Activated CD4-positive, alpha-beta T cell treated with anti-CD3 and anti-CD28 coated beads, Interleukin-2, amount 10 ng/mL, durations not matched to agents 24 days and 14 days (primary cell): ENCODE measurements at regions of chr2 and their contacts with region 1.

Region 1: DNA sequence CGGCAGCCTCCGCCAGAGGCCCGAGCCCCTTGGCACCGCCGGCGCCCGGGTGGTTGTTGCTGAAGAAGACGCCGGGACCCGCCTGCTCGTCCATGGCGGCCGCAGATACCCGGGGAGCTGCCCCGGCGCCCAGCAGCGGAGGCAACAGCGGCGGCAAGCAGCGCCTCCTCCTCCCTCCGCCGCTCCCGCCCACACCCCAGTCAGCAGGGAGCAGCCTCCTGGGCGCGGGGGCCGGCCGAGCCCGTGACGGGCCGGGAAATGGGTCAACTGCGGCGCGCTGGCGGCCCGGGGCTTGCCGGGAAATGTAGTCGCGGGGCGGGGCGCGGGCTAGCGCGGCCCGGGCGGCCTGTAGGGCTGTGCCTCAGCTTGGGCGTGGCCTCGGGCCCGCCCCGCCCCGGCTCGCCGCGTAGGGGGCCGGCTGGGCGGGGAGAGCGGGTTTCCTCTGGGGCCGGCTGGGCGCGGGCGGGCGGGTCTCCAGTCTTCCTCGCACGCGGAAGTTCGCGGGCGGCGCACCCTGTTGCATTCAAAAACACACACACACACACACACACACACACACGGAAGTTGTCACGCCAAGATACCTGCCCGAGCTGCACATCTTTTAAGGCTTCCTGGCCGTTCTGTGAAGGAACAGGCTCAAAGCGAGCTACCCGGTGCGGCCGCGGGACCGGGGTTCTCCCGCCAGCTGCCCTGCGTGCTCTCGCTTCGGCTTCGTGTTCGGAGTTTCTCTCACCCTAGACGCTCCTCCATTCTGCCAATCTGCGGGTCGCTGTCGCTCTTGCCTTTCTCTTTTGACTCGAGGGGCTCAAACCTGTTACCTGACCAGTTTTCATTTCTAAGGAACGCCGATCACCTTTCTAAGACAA is at the start of gene STRN:
- DNase-seq: peak; percentile 100
- H3K4me3 Mint-ChIP-seq: peak within 1 kb of the TSS; percentile 95
- H3K27ac Mint-ChIP-seq: peak within 1 kb of the TSS; percentile 92
- H3K4me1 Mint-ChIP-seq: peaks cover 46% of the 10 kb centered on the region
- H3K27me3 Mint-ChIP-seq: peaks cover 2% of the 10 kb centered on the region
- total RNA-seq, gene STRN: 27.0 and 28.0 TPM in 2 replicates

Region 2: DNA sequence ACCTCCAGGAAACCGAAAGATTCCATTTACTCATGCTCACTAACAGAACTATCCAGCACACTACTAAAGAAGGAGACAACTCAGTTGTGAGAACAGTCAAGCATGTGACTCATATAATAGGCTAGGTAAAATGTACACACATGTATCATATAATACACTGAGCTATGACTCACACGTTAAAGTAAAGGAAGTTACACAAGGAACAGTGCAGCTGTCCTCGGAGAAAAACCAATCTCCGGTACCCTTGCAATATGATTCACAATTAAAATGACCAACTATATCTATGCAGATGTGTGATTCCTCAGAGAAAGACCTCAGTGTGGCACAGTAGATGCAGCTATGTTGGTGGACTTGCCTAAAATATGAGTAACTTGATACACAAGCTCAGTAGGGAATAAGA is 76.8 kb before region 1 on chr2:
- intact Hi-C with region 1: loop called (anchors 2 kb)
- DNase-seq: no peak
- H3K4me3 Mint-ChIP-seq: peak overlapping the region; percentile 15
- H3K27ac Mint-ChIP-seq: peak overlapping the region; percentile 75
- H3K4me1 Mint-ChIP-seq: peaks cover 8% of the 10 kb centered on the region
- H3K27me3 Mint-ChIP-seq: no peaks in the 10 kb centered on the region

Region 3: DNA sequence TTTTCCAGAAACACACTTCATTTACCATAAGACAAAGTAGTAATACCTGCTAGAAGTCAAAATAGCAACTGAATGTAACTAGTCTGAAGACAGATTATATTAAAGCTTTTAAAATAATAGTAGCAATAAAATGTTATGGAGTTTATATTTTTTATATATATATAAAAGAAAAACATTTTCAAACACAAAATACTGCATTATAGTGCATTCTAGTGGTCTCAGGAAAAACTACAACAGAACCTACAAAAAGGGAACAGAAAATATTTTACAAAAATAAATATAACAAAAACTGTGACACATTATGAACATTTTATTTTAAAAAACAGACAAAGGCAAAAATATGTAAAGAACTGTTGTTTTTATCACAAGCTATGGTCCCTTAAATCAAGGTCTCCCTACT is 48.3 kb before region 1 on chr2:
- intact Hi-C with region 1: loop called (anchors 5 kb)
- DNase-seq: no peak
- H3K4me3 Mint-ChIP-seq: no peak overlapping the region
- H3K27ac Mint-ChIP-seq: no peak overlapping the region
- H3K4me1 Mint-ChIP-seq: peaks cover 12% of the 10 kb centered on the region
- H3K27me3 Mint-ChIP-seq: no peaks in the 10 kb centered on the region

Region 4: DNA sequence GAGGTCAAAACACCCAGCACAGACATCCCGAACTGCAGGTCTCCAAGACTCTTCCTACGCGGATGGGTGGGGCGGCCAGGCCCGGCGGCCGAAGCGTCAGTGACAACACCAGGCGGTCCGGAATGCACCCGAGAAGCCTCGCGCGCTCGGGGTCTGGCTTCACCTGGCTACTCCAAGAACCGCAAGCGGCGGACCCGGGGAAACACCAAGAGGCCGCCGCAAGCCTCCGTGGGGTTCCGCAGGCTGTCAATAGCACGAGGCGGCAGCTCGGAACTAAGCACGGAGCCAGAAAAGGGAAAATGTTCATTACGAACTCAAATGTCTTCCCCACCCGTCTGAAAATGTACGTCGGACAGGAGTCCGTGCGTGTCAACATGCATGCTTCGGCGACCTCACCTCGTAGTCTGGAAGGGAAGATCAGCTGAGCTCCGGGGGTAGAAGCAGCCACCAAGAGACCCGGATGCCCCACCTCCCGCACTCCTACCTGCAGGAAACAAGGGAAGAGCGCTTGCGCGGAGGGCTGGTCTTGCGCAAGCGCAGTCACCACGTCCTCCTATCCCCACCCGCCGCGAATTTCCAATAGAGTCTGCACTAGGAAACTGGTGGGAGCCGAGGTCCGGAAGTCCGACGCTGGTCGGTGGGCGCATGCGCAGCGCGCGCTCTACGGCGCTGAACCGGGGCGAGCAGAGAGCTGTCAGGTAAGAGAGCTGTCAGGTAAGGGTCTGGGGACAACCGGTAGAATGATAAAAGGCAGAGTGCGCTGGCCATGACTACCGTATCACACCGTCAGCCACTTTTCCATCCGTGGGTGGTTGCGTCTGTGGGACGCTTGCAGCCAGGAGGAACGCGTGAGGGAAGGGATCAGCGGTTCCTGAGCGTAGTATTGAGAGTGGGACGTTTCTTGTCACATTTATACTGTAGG is 117.5 kb after region 1 on chr2 and contains the starts of genes GPATCH11 and HEATR5B:
- intact Hi-C with region 1: loop called (anchors 1 kb)
- DNase-seq: peak; percentile 98
- H3K4me3 Mint-ChIP-seq: no peak within 1 kb of the TSS
- H3K27ac Mint-ChIP-seq: no peak within 1 kb of the TSS
- H3K4me1 Mint-ChIP-seq: peaks cover 36% of the 10 kb centered on the region
- H3K27me3 Mint-ChIP-seq: no peaks in the 10 kb centered on the region
- total RNA-seq, gene GPATCH11: 13.8 and 15.7 TPM in 2 replicates
- total RNA-seq, gene HEATR5B: 14.7 and 14.8 TPM in 2 replicates